ENCODE measurements at regions of chr6 and their contacts with region 1.

Region 1: GRCh38 chr6:52263709-52264540 is 19.6 kb upstream of the IL17F start:
- DNase-seq: peak; percentile 84
- H3K4me3 Mint-ChIP-seq: no peak overlapping the region
- H3K27ac Mint-ChIP-seq: peak overlapping the region; percentile 23
- H3K4me1 Mint-ChIP-seq: peaks cover 15% of the 10 kb centered on the region
- H3K27me3 Mint-ChIP-seq: no peaks in the 10 kb centered on the region

Region 2: GRCh38 chr6:52063584-52064344 is 200.2 kb before region 1 on chr6:
- CTCF ChIA-PET with region 1: interaction called, 4 read pairs
- intact Hi-C with region 1: loop called (anchors 1 kb)
- DNase-seq: peak; percentile 76
- H3K4me3 Mint-ChIP-seq: peak overlapping the region; percentile 20
- H3K27ac Mint-ChIP-seq: peak overlapping the region; percentile 72
- H3K4me1 Mint-ChIP-seq: peaks cover 10% of the 10 kb centered on the region
- H3K27me3 Mint-ChIP-seq: no peaks in the 10 kb centered on the region

Region 3: DNA sequence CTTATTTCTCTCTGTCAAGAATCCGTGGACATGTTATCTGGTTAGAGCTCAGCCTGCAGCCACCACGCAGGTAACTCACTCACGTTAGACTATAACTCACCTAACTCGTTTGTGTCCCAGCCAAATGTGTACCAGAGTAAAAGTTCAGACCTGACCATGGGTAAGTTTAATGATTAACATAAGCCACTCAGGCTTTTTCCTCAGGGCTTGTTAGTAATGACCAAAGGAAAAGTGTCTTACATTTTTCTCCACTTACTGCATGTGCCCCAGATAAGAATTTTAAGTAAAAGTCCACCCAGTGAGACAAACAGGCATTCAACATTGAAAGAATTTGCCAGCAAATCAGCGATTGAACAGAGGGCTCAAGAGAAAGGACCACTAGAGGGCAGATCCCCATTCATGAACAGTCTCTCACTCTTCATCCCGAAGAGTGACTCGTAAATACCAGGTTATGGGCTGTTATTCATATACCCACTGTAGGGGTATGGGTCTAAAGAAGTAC is 176.4 kb before region 1 on chr6 and contains the start of gene PKHD1:
- CTCF ChIA-PET with region 1: interaction called, 3 read pairs
- intact Hi-C with region 1: loop called (anchors 1 kb)
- DNase-seq: no peak
- H3K4me3 Mint-ChIP-seq: no peak within 1 kb of the TSS
- H3K27ac Mint-ChIP-seq: no peak within 1 kb of the TSS
- H3K4me1 Mint-ChIP-seq: no peaks in the 10 kb centered on the region
- H3K27me3 Mint-ChIP-seq: peaks cover 2% of the 10 kb centered on the region
- total RNA-seq, gene PKHD1: not detected

Region 4: DNA sequence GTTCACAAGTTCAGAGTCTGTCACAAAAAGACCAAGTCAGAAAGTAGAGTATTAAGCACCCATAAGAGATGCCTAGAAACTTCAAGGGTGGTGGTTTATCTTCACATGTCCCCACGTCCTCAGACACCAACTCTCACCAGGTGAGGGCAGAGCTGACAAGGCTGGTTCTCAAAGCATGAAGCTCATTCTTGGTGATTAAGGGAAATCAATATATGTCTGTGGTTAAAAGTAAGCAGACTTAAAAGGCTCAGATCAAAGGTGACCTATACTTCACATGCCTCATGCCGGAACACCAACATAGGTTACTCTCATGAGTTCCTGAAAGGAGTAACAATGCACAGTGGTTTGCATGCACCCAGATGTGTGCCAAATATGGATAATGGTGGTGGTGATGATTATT is 50.8 kb before region 1 on chr6:
- CTCF ChIA-PET with region 1: interaction called, 7 read pairs
- intact Hi-C with region 1: loop called (anchors 1 kb)
- DNase-seq: peak; percentile 68
- H3K4me3 Mint-ChIP-seq: no peak overlapping the region
- H3K27ac Mint-ChIP-seq: no peak overlapping the region
- H3K4me1 Mint-ChIP-seq: peaks cover 11% of the 10 kb centered on the region
- H3K27me3 Mint-ChIP-seq: peaks cover 8% of the 10 kb centered on the region

Region 5: DNA sequence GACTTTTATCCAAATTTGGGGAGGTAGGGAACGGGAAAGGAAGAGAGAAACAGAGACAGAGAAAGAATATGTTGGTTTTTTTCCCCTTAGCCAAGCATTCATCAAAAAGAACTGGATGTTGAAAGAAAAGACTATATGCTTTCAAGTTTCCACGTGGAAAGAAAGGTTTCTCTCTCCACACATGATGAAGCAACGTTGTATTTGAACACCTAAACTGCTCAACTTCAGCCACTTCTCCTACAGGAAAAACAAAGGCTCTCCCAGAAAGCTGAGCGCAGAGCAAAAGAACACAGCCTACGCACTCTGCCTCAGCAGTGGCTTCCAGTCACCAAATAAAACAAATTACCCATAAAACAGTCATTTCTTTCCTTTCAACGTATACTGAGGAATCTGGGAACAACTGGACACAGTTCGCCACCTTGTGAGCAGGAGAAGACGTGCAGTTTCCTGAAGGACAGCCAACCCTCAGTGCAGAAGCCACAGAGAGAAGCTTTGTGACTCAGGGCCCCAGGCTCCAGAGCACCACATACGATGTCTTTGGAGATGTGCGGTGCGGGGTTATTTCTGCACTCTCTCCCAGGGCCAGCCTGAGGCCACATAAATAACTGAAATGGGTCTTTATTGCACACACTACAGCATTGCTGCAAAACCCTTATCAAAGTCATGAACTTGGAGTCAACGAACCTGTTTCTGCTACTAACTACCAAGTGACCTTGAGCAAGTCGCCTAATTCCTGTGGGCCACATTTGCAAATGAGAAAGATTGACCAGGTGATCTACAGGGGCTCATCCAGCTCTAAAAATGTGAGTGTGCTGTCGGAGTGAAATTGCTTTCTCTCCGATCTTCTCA is 29.7 kb before region 1 on chr6:
- CTCF ChIA-PET with region 1: interaction called, 12 read pairs
- intact Hi-C with region 1: no loop called
- DNase-seq: peak; percentile 62
- H3K4me3 Mint-ChIP-seq: no peak overlapping the region
- H3K27ac Mint-ChIP-seq: no peak overlapping the region
- H3K4me1 Mint-ChIP-seq: peaks cover 6% of the 10 kb centered on the region
- H3K27me3 Mint-ChIP-seq: peaks cover 23% of the 10 kb centered on the region

Region 6: DNA sequence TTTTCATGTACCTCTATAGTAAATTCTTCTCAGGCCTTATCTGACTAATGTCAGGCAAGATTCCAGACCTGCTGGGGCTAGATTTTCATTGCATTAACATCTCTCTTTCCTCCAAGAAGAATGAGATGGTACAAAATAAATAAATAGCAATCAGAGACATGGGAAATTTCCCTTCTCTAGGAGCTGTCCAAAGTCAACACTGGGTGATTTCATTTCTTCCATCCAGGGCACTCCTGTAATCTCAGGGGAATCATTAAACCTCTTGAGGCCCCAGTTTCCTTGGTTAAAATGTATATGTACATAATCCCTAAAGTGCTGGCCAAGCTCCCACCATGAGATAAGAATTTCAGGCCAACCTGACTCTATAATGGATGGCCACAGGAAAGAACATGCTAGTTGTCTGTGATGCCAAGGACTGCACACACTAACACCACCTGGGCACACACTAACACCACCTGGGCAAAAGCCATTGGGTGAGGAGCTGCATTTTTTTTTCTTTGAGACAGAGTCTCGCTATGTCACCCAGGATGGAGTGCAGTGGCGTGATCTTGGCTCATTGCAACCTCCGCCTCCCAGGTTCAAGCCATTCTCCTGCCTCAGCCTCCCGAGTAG is 20.5 kb before region 1 on chr6:
- CTCF ChIA-PET with region 1: interaction called, 17 read pairs
- intact Hi-C with region 1: no loop called
- DNase-seq: no peak
- H3K4me3 Mint-ChIP-seq: no peak overlapping the region
- H3K27ac Mint-ChIP-seq: no peak overlapping the region
- H3K4me1 Mint-ChIP-seq: no peaks in the 10 kb centered on the region
- H3K27me3 Mint-ChIP-seq: peaks cover 11% of the 10 kb centered on the region

Region 7: DNA sequence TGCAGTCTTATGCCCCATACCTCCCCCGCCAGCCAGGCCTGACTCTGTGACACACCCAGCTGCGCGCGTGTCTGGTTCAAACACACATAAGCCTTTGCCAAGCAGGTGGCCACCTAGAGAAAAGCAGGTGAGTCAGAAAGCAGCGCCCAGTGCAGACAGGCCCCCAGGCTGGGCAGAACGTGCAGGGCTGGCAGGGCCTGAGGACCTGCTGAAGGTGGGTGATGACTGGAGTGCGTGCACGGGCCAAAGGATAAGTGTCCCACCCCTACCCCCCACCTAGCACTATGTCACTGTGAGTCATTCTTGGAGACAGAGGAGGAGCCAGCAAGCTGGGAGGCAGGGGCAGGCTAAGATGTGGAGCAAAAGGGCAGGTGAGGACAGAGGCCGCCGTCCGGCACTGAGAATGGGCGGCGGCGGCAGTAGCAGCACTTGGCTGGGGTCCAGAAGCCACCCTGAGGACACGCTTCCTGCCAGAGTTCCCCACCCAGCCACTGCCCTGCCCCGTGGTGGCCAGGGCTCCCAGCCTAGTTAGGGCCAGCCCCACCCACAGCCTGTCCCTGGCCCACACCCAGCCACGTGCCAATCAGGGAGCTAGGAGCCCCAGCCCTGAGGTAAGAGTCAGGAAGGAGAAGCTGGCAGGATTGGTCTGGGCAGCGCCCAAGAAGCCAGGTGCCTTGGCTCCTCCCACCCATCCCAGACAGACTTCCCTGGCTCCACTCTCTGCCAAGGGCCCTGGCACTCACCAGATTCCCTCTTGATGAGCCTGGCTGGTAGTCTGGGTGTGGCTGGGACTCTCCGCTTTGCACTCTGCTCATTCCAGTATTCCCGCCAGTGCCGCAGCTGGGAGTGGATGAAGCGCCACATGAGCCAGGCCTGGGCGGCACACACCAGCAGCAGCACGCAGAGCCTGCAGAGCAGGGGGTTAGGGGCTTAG is 240.2 kb after region 1 on chr6:
- CTCF ChIA-PET with region 1: no interaction called
- intact Hi-C with region 1: no loop called
- DNase-seq: no peak
- H3K4me3 Mint-ChIP-seq: no peak overlapping the region
- H3K27ac Mint-ChIP-seq: no peak overlapping the region
- H3K4me1 Mint-ChIP-seq: no peaks in the 10 kb centered on the region
- H3K27me3 Mint-ChIP-seq: no peaks in the 10 kb centered on the region

Measured in activated naive CD4-positive, alpha-beta T cell treated with anti-CD3 and anti-CD28 coated beads for 36 hours (primary cell).